ENCODE measurements at regions of chr1 and their contacts with region 1.

Region 1: GRCh38 chr1:48853006-48853405 is 76.3 kb upstream of the BEND5 start:
- DNase-seq: no peak
- ATAC-seq: no peak
- H3K4me3 ChIP-seq: no peak overlapping the region
- H3K27ac ChIP-seq: no peak overlapping the region
- H3K4me1 ChIP-seq: no peaks in the 10 kb centered on the region
- H3K27me3 ChIP-seq: no peaks in the 10 kb centered on the region
- CTCF ChIP-seq: no peak
- POLR2A ChIP-seq: no peak

Region 2: GRCh38 chr1:48876328-48876785 is 23.4 kb after region 1 on chr1:
- intact Hi-C with region 1: loop called in 1 of 10 experiments (anchors 2 kb)
- DNase-seq: no peak
- ATAC-seq: no peak
- H3K4me3 ChIP-seq: no peak overlapping the region
- H3K27ac ChIP-seq: no peak overlapping the region
- H3K4me1 ChIP-seq: no peaks in the 10 kb centered on the region
- H3K27me3 ChIP-seq: peaks cover 0 to 4% (median 0%) of the 10 kb centered on the region in 9 donors
- CTCF ChIP-seq: no peak
- POLR2A ChIP-seq: no peak

Measured in heart left ventricle (tissue), 16 donors.